ENCODE measurements at regions of chr2 and their contacts with region 1.

Region 1: DNA sequence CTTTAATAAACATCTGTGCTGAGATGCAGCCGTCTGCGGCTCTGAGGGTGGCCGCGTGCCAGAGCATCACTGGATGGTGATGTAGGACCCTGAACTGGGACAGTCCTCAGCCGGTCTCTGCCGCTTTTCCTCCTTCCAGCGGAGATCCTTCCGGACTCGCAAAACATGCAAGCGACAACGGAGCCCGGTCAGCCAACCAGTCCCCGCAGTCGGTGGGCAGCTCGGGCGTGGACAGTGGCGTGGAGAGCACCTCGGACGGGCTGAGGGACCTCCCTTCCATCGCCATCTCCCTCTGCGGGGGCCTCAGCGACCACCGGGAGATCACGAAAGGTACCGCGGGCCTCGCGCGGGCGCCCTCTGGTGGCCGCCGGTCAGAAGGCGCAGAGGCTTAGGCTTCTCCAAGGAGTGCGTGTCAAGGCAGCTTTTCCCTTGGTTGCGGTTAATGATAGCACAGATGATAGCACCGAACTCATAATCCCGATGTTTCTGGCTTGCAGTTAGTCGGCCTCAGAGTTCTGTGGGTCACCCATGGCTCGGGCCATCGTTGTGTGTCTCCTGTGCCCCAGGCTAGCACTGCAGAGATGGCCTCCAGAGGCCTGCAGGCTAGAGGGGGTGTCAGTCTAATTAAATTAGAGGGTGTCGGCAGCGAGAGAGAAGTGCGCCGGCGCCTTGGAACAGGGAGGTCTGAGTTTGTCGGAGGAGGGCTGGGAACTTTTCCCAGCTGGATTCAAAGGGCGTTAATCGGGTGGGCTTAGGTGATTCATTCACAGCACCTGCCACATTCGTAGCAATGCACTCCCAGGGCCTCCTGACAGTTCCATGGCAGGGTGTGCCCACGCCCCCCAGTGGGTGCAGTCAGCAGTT is 38.5 kb downstream of the LPIN1 start:
- DNase-seq: no peak
- H3K4me3 ChIP-seq: peak overlapping the region; percentile 45
- H3K27ac ChIP-seq: no peak overlapping the region
- H3K27me3 ChIP-seq: no peaks in the 10 kb centered on the region
- CTCF ChIP-seq: peak; percentile 69

Region 2: GRCh38 chr2:11710234-11710975 is 74.6 kb before region 1 on chr2:
- CTCF ChIA-PET with region 1: no interaction called
- POLR2A ChIA-PET with region 1: no interaction called
- DNase-seq: peak; percentile 63
- H3K4me3 ChIP-seq: no peak overlapping the region
- H3K27ac ChIP-seq: peak overlapping the region; percentile 53
- H3K27me3 ChIP-seq: no peaks in the 10 kb centered on the region
- CTCF ChIP-seq: no peak

Region 3: DNA sequence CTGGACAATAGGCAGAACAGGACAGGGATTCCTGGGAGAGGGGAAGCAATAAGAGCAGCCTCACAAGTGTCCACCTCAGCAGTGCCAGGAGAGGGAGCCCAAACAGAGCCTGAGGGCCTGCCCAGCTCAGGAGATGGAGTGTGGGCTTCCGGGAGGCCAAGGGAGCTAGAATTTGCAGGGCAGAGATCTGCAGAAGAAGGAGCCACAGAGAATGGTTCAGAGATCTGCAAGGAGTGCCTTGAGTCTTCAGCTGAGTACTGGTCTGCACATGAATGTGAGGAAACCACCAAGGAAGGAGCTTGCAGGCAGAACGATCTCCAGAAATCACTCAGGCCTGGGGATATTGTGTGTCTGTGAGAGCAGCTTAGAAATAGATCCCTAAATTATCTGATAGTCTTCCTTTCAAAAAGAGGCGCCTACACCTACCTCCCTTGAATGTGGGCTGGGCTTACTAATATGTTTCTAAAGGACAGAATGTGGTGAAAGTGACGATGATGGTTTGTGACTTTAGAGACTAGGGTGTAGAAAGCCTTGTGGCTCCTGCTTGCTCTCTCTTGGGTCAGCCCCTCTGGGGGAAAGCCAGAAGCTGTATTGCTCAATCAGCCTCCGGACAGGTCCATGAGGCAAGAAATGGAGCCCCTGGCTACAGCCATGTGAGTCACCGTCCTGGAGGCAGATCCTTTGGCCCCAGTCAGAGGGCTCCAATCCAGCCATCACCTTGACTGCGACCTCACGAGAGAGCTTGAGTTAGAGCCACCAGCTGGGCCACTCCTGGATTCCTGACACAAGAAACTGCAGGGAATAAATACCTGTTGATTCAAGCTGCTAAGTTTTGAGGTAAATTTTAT is 46.2 kb before region 1 on chr2:
- CTCF ChIA-PET with region 1: interaction called, 26 read pairs
- POLR2A ChIA-PET with region 1: interaction called, 3 read pairs
- DNase-seq: peak; percentile 53
- H3K4me3 ChIP-seq: no peak overlapping the region
- H3K27ac ChIP-seq: peak overlapping the region; percentile 48
- H3K27me3 ChIP-seq: peaks cover 4% of the 10 kb centered on the region
- CTCF ChIP-seq: peak; percentile 66